ENCODE measurements at regions of chr14 and their contacts with region 1.

Region 1: GRCh38 chr14:101628471-101628966 is 67.2 kb downstream of the DIO3 start:
- DNase-seq: peak; percentile 57 to 85 (median 72)
- ATAC-seq: peak; percentile 97
- H3K4me3 ChIP-seq: no peak overlapping the region
- H3K4me3 Mint-ChIP-seq: no peak overlapping the region
- H3K27ac ChIP-seq: no peak overlapping the region
- H3K27ac Mint-ChIP-seq: no peak overlapping the region
- H3K4me1 ChIP-seq: peaks cover 11% of the 10 kb centered on the region
- H3K4me1 Mint-ChIP-seq: peaks cover 9% of the 10 kb centered on the region
- H3K27me3 ChIP-seq: no peaks in the 10 kb centered on the region
- H3K27me3 Mint-ChIP-seq: peaks cover under 1% of the 10 kb centered on the region
- CTCF ChIP-seq: peak; percentile 99

Region 2: DNA sequence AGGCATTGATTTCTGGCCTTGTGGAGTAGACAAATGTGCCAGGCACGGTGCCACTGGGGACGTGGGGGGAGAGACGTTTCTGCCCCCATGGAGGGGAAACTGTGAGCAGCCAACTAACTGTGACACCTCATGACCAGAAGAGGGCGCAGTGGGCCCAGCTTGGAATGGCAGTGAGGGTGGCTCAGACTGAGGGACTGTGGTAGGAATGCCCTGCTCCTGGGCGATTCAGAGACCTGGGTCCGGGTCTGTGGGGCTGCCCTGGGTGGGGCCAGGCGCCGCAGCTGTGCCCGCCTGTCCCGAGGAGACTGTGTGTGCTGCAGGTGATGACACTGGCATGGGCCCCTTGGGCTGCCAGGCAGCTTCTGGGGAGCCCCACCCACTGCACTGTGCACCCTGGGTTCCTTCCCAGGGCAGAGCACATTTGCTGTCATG is 1244.8 kb before region 1 on chr14:
- CTCF ChIA-PET with region 1: no interaction called
- POLR2A ChIA-PET with region 1: no interaction called
- intact Hi-C with region 1: loop called in 1 of 2 experiments (anchors 5 kb)
- DNase-seq: peak; percentile 42 to 84 (median 56)
- ATAC-seq: peak; percentile 88
- H3K4me3 ChIP-seq: no peak overlapping the region
- H3K4me3 Mint-ChIP-seq: no peak overlapping the region
- H3K27ac ChIP-seq: no peak overlapping the region
- H3K27ac Mint-ChIP-seq: no peak overlapping the region
- H3K4me1 ChIP-seq: peaks cover 15% of the 10 kb centered on the region
- H3K4me1 Mint-ChIP-seq: peaks cover 19% of the 10 kb centered on the region
- H3K27me3 ChIP-seq: no peaks in the 10 kb centered on the region
- H3K27me3 Mint-ChIP-seq: no peaks in the 10 kb centered on the region
- CTCF ChIP-seq: peak; percentile 78

Region 3: DNA sequence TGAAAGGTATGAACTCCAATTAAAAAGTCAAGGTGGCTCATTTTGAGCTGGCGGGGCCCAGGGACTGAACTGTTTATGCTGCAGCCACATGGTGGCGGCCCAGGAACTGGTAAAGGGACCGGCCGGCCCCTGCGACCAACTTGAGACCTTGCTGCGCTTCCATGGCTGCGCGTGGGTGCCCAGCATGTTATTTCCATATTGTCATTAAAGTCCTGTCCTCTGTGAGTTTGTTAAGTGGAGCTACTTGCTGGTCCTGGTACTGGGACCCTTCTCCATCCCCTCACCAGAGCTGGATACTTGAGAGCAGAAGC is 1103.6 kb before region 1 on chr14:
- CTCF ChIA-PET with region 1: no interaction called
- POLR2A ChIA-PET with region 1: no interaction called
- intact Hi-C with region 1: loop called (anchors 5 to 10 kb)
- DNase-seq: peak in 5 of 14 experiments; percentile 12 to 59 (median 27)
- ATAC-seq: no peak
- H3K4me3 ChIP-seq: no peak overlapping the region
- H3K4me3 Mint-ChIP-seq: no peak overlapping the region
- H3K27ac ChIP-seq: no peak overlapping the region
- H3K27ac Mint-ChIP-seq: no peak overlapping the region
- H3K4me1 ChIP-seq: no peaks in the 10 kb centered on the region
- H3K4me1 Mint-ChIP-seq: no peaks in the 10 kb centered on the region
- H3K27me3 ChIP-seq: no peaks in the 10 kb centered on the region
- H3K27me3 Mint-ChIP-seq: no peaks in the 10 kb centered on the region
- CTCF ChIP-seq: peak; percentile 55

Region 4: GRCh38 chr14:100654814-100655740 is 973.4 kb before region 1 on chr14:
- CTCF ChIA-PET with region 1: no interaction called
- POLR2A ChIA-PET with region 1: no interaction called
- intact Hi-C with region 1: loop called (anchors 5 kb)
- DNase-seq: peak in 13 of 14 experiments; percentile 24 to 76 (median 42)
- ATAC-seq: peak; percentile 67
- H3K4me3 ChIP-seq: no peak overlapping the region
- H3K4me3 Mint-ChIP-seq: no peak overlapping the region
- H3K27ac ChIP-seq: no peak overlapping the region
- H3K27ac Mint-ChIP-seq: no peak overlapping the region
- H3K4me1 ChIP-seq: peaks cover 25% of the 10 kb centered on the region
- H3K4me1 Mint-ChIP-seq: peaks cover 5% of the 10 kb centered on the region
- H3K27me3 ChIP-seq: peaks cover 17 to 22% of the 10 kb centered on the region in 2 experiments
- H3K27me3 Mint-ChIP-seq: peaks cover 26% of the 10 kb centered on the region
- CTCF ChIP-seq: peak; percentile 73

Region 5: GRCh38 chr14:100662879-100663760 is 965.4 kb before region 1 on chr14:
- CTCF ChIA-PET with region 1: no interaction called
- POLR2A ChIA-PET with region 1: no interaction called
- intact Hi-C with region 1: loop called in 1 of 2 experiments (anchors 5 kb)
- DNase-seq: peak; percentile 31 to 80 (median 45)
- ATAC-seq: no peak
- H3K4me3 ChIP-seq: no peak overlapping the region
- H3K4me3 Mint-ChIP-seq: no peak overlapping the region
- H3K27ac ChIP-seq: no peak overlapping the region
- H3K27ac Mint-ChIP-seq: no peak overlapping the region
- H3K4me1 ChIP-seq: peaks cover 10% of the 10 kb centered on the region
- H3K4me1 Mint-ChIP-seq: no peaks in the 10 kb centered on the region
- H3K27me3 ChIP-seq: peaks cover 0 to 2% of the 10 kb centered on the region in 2 experiments
- H3K27me3 Mint-ChIP-seq: peaks cover 11% of the 10 kb centered on the region
- CTCF ChIP-seq: peak; percentile 93

Region 6: DNA sequence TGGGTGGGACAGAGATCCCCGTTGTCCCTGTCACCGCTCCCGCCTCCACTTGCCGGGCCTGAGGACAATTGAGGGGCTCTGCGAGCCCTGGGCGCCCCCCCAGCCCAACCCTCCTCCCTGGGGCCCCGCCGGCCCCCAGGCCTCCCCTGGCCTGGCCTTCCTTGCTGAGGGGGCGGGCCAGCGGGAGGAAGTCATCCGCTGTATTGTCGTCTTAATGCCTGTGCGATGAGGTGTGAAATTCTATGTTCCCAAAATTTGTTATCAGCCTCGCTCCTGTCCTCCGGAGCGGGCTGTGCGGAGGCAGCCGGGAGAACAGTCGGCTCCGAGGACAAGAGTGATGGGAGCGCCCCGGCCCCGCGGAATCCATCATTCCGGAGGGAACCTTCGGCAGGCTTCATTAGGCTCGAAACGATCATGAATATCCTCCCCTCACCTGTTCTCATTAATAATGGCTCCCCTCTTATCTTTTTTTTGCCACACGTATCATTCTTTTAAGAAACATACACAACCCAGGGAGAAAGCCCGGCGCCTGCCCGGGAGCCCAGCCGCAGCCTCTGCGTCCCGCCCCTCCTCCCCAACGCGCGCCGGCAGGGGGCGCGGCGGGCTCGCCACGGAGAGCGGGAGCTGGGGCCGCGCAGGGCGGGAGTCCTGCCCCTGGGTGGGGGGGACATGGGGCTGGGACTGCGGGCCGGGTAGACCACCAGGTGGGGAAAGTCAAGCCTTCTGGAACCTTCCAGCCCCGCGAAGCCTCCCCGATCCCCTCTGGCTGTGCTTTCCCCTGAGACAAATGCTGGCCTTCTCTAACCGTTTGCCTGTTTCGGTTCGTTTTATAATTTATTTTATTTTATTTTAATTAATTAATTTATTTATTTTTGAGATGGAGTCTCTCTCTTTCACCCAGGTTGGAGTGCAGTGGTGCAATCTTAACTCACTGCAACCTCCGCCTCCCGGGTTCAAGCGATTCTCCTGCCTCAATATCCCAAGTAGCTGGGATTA is 918.9 kb before region 1 on chr14:
- CTCF ChIA-PET with region 1: no interaction called
- POLR2A ChIA-PET with region 1: interaction called, 3 read pairs
- intact Hi-C with region 1: loop called (anchors 1 to 2 kb)
- DNase-seq: peak in 5 of 14 experiments; percentile 8 to 47 (median 11)
- ATAC-seq: no peak
- H3K4me3 ChIP-seq: no peak overlapping the region
- H3K4me3 Mint-ChIP-seq: no peak overlapping the region
- H3K27ac ChIP-seq: no peak overlapping the region
- H3K27ac Mint-ChIP-seq: no peak overlapping the region
- H3K4me1 ChIP-seq: no peaks in the 10 kb centered on the region
- H3K4me1 Mint-ChIP-seq: no peaks in the 10 kb centered on the region
- H3K27me3 ChIP-seq: peaks cover 2 to 23% of the 10 kb centered on the region in 2 experiments
- H3K27me3 Mint-ChIP-seq: peaks cover 25% of the 10 kb centered on the region
- CTCF ChIP-seq: peak; percentile 56

Region 7: GRCh38 chr14:100850841-100851585 is 777.5 kb before region 1 on chr14:
- CTCF ChIA-PET with region 1: interaction called, 3 read pairs
- POLR2A ChIA-PET with region 1: interaction called, 3 read pairs
- intact Hi-C with region 1: loop called (anchors 1 kb)
- DNase-seq: peak; percentile 57 to 83 (median 74)
- ATAC-seq: no peak
- H3K4me3 ChIP-seq: no peak overlapping the region
- H3K4me3 Mint-ChIP-seq: no peak overlapping the region
- H3K27ac ChIP-seq: no peak overlapping the region
- H3K27ac Mint-ChIP-seq: no peak overlapping the region
- H3K4me1 ChIP-seq: peaks cover 6% of the 10 kb centered on the region
- H3K4me1 Mint-ChIP-seq: no peaks in the 10 kb centered on the region
- H3K27me3 ChIP-seq: no peaks in the 10 kb centered on the region
- H3K27me3 Mint-ChIP-seq: no peaks in the 10 kb centered on the region
- CTCF ChIP-seq: peak; percentile 76

Region 8: GRCh38 chr14:101755591-101756324 is 127.2 kb after region 1 on chr14:
- CTCF ChIA-PET with region 1: no interaction called
- POLR2A ChIA-PET with region 1: no interaction called
- intact Hi-C with region 1: no loop called
- DNase-seq: no peak
- ATAC-seq: no peak
- H3K4me3 ChIP-seq: no peak overlapping the region
- H3K4me3 Mint-ChIP-seq: no peak overlapping the region
- H3K27ac ChIP-seq: no peak overlapping the region
- H3K27ac Mint-ChIP-seq: no peak overlapping the region
- H3K4me1 ChIP-seq: peaks cover 7% of the 10 kb centered on the region
- H3K4me1 Mint-ChIP-seq: peaks cover 7% of the 10 kb centered on the region
- H3K27me3 ChIP-seq: peaks cover 0 to 10% of the 10 kb centered on the region in 2 experiments
- H3K27me3 Mint-ChIP-seq: peaks cover 19% of the 10 kb centered on the region
- CTCF ChIP-seq: no peak

Measured in CD4-positive, alpha-beta T cell (primary cell).